ENCODE measurements at regions of chr4 and their contacts with region 1.

Region 1: DNA sequence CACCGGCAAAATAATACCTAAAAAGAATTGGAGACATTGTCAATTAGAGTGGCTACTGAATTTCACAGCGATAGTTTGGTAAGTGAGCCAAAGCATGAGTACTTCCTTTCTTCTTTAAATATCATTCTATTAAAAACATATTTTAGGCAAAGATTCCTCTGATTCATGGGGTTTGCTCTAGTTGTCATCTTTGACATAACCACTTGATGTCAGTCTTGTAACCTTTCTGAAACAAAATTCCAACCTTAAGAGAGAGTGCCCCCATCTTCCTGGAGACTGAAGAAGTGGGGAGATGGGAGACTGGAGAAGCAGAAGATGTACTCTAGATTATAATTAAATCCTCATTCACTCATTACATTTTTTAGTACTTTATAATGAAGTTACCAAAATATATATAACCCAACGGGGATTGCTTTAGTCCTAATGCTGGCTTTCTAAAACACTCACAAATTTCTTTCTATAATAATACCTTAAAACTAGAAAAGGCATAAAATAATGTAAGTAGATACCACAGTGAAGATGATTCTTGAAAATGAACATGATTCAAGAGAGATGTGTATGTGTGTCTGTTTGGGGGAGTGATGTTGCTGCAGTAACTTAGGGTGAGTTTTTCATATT is 96.4 kb downstream of the EMCN start:
- DNase-seq: peak; percentile 58
- H3K4me3 Mint-ChIP-seq: no peak overlapping the region
- H3K27ac Mint-ChIP-seq: peak overlapping the region; percentile 80
- H3K4me1 Mint-ChIP-seq: peaks cover 12% of the 10 kb centered on the region
- H3K27me3 Mint-ChIP-seq: no peaks in the 10 kb centered on the region
- CTCF ChIP-seq: peak; percentile 69

Region 2: DNA sequence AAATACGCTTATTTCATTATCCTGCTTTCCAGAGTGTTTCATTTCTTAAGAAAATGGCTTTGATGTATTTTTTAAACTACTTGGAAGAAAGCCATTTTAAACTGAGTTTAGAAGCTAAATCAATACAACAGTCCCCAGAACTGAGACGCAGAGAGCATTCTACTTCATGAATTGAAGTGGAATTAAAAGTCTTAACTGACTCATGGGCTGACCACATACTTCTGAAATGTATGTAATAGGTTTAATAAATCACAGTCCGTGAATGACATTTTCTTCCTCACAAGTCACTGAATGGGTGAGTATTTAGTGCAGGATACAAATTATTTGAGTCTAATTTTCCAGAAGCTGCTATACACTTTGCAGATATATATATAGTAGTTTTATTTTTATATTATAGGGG is 40.7 kb after region 1 on chr4:
- CTCF ChIA-PET with region 1: no interaction called
- POLR2A ChIA-PET with region 1: no interaction called
- intact Hi-C with region 1: no loop called
- DNase-seq: peak; percentile 19
- H3K4me3 Mint-ChIP-seq: no peak overlapping the region
- H3K27ac Mint-ChIP-seq: peak overlapping the region; percentile 17
- H3K4me1 Mint-ChIP-seq: peaks cover 5% of the 10 kb centered on the region
- H3K27me3 Mint-ChIP-seq: no peaks in the 10 kb centered on the region
- CTCF ChIP-seq: no peak

Region 3: DNA sequence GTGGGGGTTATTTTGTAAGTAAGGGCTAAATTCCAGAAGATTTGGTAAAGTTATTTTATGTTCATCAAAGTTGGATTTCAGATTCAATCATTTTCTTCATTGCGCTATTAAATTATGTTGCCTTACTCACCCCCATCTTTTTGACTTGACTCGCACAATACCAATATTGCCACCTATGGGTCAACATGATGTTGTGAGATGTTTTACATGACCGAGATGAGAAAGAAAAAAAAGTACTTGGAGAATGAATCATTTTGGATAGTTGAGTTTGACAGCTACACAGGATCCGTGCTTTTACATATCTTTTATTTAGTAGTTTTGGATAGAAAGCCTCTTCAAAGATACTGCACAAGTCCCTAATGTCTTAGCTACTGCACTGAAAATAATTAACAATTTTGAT is 320.6 kb after region 1 on chr4:
- CTCF ChIA-PET with region 1: interaction called, 5 read pairs
- POLR2A ChIA-PET with region 1: no interaction called
- intact Hi-C with region 1: loop called (anchors 1 kb)
- DNase-seq: peak; percentile 77
- H3K4me3 Mint-ChIP-seq: no peak overlapping the region
- H3K27ac Mint-ChIP-seq: no peak overlapping the region
- H3K4me1 Mint-ChIP-seq: peaks cover 22% of the 10 kb centered on the region
- H3K27me3 Mint-ChIP-seq: no peaks in the 10 kb centered on the region
- CTCF ChIP-seq: peak; percentile 53

Region 4: DNA sequence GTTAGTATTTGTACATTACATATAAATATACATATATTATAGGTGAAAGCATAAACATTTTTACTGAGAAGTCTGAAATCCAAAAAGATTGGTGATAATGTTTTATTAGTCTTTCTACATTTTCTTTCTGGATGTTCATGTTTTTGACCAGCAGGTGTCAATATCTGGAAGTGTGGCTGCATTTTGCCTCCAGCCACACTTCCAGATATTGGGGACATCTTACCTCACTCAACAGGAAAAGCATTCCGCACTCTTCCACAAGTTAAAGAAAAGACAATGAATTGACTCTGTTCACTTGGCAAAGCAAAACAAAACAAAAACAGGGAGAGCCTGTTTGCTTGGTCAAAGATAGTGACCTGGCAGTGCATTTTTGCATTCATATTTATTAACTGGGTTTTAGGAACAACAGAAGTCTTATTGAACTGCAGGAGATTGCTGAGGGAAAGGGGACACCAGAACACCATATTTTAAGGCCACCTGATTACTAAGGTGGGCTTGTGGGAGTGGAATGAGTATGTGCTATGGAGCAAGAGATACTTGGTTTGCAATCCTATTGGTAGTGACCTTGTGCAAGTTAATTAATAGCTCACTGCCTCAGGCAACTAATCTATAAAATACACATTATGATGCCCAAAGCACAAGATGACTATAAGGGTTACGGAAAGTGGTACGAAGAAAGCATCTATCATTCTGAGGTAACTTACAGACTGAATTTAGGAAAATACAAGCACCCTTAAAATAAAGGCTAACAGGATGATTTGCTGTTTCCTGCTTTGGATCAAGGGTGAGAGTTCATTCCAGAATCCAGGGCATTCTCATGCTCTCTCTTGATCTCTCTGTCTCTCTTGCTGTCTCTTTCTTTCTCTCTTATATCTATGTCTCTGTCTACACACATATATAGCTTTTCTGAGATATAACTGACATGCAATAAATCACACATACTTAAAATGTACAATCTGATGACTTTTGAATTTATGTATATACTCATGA is 486.3 kb after region 1 on chr4:
- CTCF ChIA-PET with region 1: no interaction called
- POLR2A ChIA-PET with region 1: no interaction called
- intact Hi-C with region 1: loop called (anchors 10 kb)
- DNase-seq: peak; percentile 31
- H3K4me3 Mint-ChIP-seq: no peak overlapping the region
- H3K27ac Mint-ChIP-seq: no peak overlapping the region
- H3K4me1 Mint-ChIP-seq: peaks cover 4% of the 10 kb centered on the region
- H3K27me3 Mint-ChIP-seq: no peaks in the 10 kb centered on the region
- CTCF ChIP-seq: peak; percentile 39

Region 5: DNA sequence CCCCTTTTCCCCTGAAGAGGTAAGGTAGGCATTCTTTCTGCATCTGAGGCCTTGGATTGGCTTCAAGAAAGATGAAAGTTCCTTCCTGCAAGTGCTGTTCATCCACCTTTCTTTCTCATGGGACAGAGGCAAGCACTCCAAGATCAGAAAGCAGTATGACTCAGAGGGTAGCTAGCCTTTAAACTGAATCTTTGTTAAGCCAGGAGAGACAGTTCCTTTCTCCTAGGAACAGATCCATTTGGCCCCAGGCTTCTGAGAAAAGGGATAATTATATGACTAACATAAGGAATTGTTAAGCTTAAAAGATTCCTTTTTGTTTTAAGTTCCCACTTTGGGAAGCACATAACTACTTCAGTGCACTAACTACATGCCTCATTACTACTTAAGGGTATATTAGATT is 733.9 kb after region 1 on chr4:
- CTCF ChIA-PET with region 1: no interaction called
- POLR2A ChIA-PET with region 1: no interaction called
- intact Hi-C with region 1: loop called (anchors 5 kb)
- DNase-seq: peak; percentile 92
- H3K4me3 Mint-ChIP-seq: no peak overlapping the region
- H3K27ac Mint-ChIP-seq: peak overlapping the region; percentile 96
- H3K4me1 Mint-ChIP-seq: peaks cover 35% of the 10 kb centered on the region
- H3K27me3 Mint-ChIP-seq: no peaks in the 10 kb centered on the region
- CTCF ChIP-seq: no peak

Region 6: GRCh38 chr4:101205916-101206315 is 784.4 kb after region 1 on chr4:
- CTCF ChIA-PET with region 1: no interaction called
- POLR2A ChIA-PET with region 1: no interaction called
- intact Hi-C with region 1: loop called (anchors 10 kb)
- DNase-seq: peak; percentile 46
- H3K4me3 Mint-ChIP-seq: no peak overlapping the region
- H3K27ac Mint-ChIP-seq: peak overlapping the region; percentile 52
- H3K4me1 Mint-ChIP-seq: peaks cover 20% of the 10 kb centered on the region
- H3K27me3 Mint-ChIP-seq: no peaks in the 10 kb centered on the region
- CTCF ChIP-seq: no peak

Region 7: GRCh38 chr4:102263011-102263787 is 1841.7 kb after region 1 on chr4:
- CTCF ChIA-PET with region 1: no interaction called
- POLR2A ChIA-PET with region 1: no interaction called
- intact Hi-C with region 1: loop called (anchors 1 kb)
- DNase-seq: peak; percentile 58
- H3K4me3 Mint-ChIP-seq: no peak overlapping the region
- H3K27ac Mint-ChIP-seq: no peak overlapping the region
- H3K4me1 Mint-ChIP-seq: peaks cover 7% of the 10 kb centered on the region
- H3K27me3 Mint-ChIP-seq: no peaks in the 10 kb centered on the region
- CTCF ChIP-seq: peak; percentile 67

Measured in MCF 10A (cell line).